Activated naive CD4-positive, alpha-beta T cell treated with anti-CD3 and anti-CD28 coated beads for 36 hours (primary cell): ENCODE measurements at regions of chr5 and their contacts with region 1.

Region 1: GRCh38 chr5:149852641-149853330 is 91.8 kb downstream of the PDE6A start:
- DNase-seq: peak; percentile 70
- H3K4me3 Mint-ChIP-seq: no peak overlapping the region
- H3K27ac Mint-ChIP-seq: no peak overlapping the region
- H3K4me1 Mint-ChIP-seq: no peaks in the 10 kb centered on the region
- H3K27me3 Mint-ChIP-seq: no peaks in the 10 kb centered on the region

Region 2: GRCh38 chr5:149636851-149637246 is 215.9 kb before region 1 on chr5:
- CTCF ChIA-PET with region 1: interaction called, 13 read pairs
- intact Hi-C with region 1: loop called (anchors 1 kb)
- DNase-seq: peak; percentile 82
- H3K4me3 Mint-ChIP-seq: no peak overlapping the region
- H3K27ac Mint-ChIP-seq: no peak overlapping the region
- H3K4me1 Mint-ChIP-seq: peaks cover 13% of the 10 kb centered on the region
- H3K27me3 Mint-ChIP-seq: no peaks in the 10 kb centered on the region

Region 3: DNA sequence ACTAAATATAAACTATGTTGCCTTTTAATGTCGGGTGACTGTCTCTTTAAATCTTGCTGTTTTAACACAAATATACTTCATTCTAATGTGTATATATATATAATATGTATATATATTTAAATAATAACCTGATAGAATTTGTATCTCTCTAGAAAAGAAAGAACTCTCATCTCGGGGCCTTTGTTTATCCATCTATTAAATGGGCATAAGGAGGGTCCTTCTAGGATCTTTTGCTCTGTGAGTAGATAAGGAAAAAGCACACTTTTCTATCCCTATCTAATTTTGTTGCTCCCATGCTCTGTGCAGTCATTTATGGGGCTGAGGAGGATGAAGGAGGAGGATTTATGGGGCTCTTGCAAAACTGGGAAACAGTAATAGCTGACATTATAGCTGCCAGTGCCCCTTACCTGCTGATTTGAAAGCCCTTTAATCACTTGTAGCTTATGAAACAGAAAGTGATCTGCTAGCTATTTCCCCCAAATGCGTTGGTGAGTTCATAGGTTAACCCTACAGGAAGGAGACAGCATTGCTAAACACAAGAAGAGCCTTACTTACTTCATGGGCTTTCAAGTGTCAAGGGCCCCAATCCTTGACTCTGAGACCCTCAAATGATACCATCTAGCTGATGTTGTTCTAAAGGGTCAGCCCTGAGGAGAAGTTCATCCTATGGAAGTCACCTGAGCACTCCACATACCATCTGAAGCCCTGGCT is 128.5 kb before region 1 on chr5:
- CTCF ChIA-PET with region 1: no interaction called
- intact Hi-C with region 1: no loop called
- DNase-seq: peak; percentile 25
- H3K4me3 Mint-ChIP-seq: no peak overlapping the region
- H3K27ac Mint-ChIP-seq: peak overlapping the region; percentile 68
- H3K4me1 Mint-ChIP-seq: peaks cover 9% of the 10 kb centered on the region
- H3K27me3 Mint-ChIP-seq: peaks cover 3% of the 10 kb centered on the region

Region 4: DNA sequence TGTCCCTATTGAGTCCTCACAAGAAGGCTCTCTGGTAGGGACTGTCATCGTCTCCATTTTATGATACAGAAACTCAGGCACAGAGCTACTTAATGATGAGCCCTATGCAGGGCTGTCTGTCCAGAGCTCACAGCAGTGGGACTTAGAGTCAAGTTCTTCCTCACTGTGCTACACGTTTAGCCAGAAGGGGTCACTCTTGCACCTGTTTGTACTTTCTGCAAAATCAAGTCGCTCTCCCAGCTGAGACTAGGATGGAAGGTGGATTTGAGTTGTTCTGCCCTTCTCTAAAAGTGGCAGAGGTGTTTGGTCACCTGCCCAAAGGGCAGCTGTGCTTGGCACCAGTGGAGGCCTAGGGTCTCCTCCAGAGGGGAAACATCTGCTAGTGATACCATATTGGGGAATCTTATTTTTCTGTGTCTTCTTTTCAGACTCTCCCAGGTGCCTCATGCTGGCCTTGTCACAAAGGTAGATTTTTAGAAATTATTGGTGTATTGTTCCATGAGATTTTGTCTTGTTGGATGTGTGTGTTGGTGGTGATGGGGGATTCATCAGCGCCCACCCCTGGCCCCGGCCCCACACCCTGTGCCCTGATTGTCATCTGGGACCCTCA is 18.4 kb before region 1 on chr5:
- CTCF ChIA-PET with region 1: interaction called, 25 read pairs
- intact Hi-C with region 1: loop called (anchors 1 kb)
- DNase-seq: peak; percentile 79
- H3K4me3 Mint-ChIP-seq: no peak overlapping the region
- H3K27ac Mint-ChIP-seq: no peak overlapping the region
- H3K4me1 Mint-ChIP-seq: peaks cover 5% of the 10 kb centered on the region
- H3K27me3 Mint-ChIP-seq: no peaks in the 10 kb centered on the region